ENCODE measurements at regions of chr4 and their contacts with region 1.

Region 1: GRCh38 chr4:152010710-152011079 is 249.9 kb upstream of the GATB start:
- DNase-seq: peak; percentile 53
- ATAC-seq: peak; percentile 64
- H3K4me3 ChIP-seq: peak overlapping the region; percentile 7; the same call in 1 of the 2 replicates
- H3K27ac ChIP-seq: peak overlapping the region; percentile 96
- H3K4me1 ChIP-seq: peaks cover 35% of the 10 kb centered on the region
- H3K27me3 ChIP-seq: no peaks in the 10 kb centered on the region
- CTCF ChIP-seq: no peak

Region 2: GRCh38 chr4:151792995-151793394 is 217.7 kb before region 1 on chr4:
- CTCF ChIA-PET with region 1: no interaction called
- POLR2A ChIA-PET with region 1: no interaction called
- intact Hi-C with region 1: no loop called
- DNase-seq: no peak
- ATAC-seq: no peak
- H3K4me3 ChIP-seq: no peak overlapping the region
- H3K27ac ChIP-seq: no peak overlapping the region
- H3K4me1 ChIP-seq: 0 out of 2 replicates have a peak, but pooled peaks cover 6% of the 10 kb centered on the region
- H3K27me3 ChIP-seq: no peaks in the 10 kb centered on the region
- CTCF ChIP-seq: no peak

Region 3: DNA sequence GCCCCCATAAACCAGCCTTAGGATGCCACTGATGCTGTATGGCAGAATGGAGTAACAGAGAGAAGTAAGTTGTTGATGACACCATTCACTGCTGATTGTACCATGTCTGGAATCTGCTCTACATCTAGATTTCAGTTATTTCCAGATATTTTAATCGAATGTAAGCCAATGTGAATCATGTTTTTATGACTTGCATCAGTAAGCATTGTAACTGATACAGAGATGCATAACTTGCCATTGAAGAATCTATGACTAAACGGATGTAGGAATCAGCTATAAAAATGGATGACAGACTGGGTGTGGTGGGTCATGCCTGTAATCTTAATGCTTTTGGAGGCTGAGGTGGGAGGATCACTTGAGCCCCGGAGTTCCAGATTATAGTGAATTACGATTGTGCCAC is 88.9 kb before region 1 on chr4:
- CTCF ChIA-PET with region 1: no interaction called
- POLR2A ChIA-PET with region 1: interaction called, 4 read pairs
- intact Hi-C with region 1: loop called (anchors 2 kb)
- DNase-seq: peak; percentile 85
- ATAC-seq: peak; percentile 88
- H3K4me3 ChIP-seq: no peak overlapping the region
- H3K27ac ChIP-seq: peak overlapping the region; percentile 96
- H3K4me1 ChIP-seq: peaks cover 25% of the 10 kb centered on the region
- H3K27me3 ChIP-seq: no peaks in the 10 kb centered on the region
- CTCF ChIP-seq: no peak

Region 4: DNA sequence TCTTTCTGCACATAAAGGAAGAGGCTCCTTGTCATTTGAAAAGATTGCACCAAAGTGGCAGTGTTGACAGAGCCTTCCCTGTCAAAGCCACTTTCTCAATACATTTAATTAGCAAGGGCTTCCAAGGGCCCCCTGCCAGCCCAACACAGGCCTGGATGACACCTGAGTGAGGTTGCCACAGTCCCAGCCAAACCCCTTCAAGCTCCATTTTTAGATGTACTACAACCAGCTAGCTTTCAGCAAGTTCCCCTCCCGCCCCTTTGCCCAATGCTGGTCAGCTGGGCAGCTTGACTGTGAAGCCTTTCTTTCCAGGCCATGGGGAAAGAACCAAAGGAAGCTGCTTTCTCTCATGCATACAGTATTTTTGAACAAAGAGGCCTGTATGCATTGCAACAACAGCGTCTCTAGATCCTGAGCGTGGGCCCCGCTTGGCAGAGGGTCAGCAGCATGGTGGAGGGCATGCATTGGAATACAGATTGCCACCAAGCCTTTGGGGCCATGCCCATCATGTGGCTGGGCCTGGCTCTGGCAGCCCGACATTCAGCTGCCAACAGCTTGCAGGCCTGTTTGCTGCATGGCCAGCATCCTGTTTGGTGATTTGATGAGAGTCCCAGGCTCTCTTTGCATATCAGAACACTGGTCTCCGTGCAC is 11.2 kb after region 1 on chr4:
- CTCF ChIA-PET with region 1: no interaction called
- POLR2A ChIA-PET with region 1: no interaction called
- intact Hi-C with region 1: no loop called
- DNase-seq: no peak
- ATAC-seq: no peak
- H3K4me3 ChIP-seq: no peak overlapping the region
- H3K27ac ChIP-seq: no peak overlapping the region
- H3K4me1 ChIP-seq: peaks cover 8% of the 10 kb centered on the region; the same call in 1 of the 2 replicates
- H3K27me3 ChIP-seq: no peaks in the 10 kb centered on the region
- CTCF ChIP-seq: no peak

Region 5: DNA sequence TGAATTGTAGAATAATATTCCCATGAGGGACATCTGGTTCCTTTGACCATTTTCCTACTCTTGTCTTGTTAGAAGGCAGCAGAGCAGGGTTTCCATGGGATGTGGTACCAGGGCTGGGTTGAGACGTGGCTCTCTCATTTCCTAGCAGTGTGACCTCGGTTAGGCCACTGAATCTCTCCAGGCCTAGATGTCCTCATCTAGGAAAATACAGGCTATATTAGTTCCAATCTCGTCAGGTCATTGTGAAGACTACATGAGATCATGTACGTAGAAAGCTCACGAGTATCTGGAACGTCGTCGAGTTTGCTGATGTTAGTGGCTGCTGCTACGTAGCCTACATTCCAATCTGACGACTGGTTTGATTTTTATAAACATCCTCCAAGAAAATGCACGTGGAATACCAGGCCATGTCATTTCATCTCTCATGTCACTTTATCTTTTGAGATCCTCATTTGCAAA is 28.4 kb after region 1 on chr4:
- CTCF ChIA-PET with region 1: no interaction called
- POLR2A ChIA-PET with region 1: no interaction called
- intact Hi-C with region 1: loop called (anchors 2 kb)
- DNase-seq: peak; percentile 55
- ATAC-seq: no peak
- H3K4me3 ChIP-seq: no peak overlapping the region
- H3K27ac ChIP-seq: peak overlapping the region; percentile 60
- H3K4me1 ChIP-seq: peaks cover 23% of the 10 kb centered on the region
- H3K27me3 ChIP-seq: no peaks in the 10 kb centered on the region
- CTCF ChIP-seq: no peak

Region 6: DNA sequence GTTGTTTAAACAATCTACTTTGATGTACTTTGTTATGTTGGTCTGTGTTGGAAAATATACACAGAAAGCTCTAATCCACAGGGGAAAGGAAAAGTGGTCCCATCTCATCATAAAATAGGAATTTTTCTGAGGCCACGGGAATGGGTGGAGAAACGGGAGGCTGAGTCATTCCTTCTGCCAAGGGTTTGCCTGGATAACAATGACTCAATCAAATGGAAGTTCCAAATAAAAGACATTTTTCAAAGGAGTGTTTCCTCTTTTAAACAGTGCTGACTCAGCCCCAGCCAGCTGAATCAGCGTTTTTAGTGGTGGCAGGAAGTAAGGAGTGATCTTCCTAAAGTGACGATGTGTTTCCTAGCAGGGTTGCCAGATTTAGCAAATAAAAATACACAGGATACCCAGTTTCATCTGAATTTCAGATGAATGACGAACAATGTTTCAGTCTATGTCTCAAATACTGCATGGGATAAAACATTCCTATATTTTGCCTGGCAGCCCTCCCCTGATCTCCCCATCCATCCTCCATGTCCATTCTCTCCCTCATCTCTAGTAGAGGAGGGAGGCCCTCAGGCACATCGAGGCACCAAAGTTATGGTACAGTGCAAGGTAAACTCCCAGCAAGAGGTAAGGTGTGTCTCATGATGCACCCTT is 95.5 kb after region 1 on chr4:
- CTCF ChIA-PET with region 1: no interaction called
- POLR2A ChIA-PET with region 1: no interaction called
- intact Hi-C with region 1: loop called (anchors 1 kb)
- DNase-seq: peak; percentile 97
- ATAC-seq: peak; percentile 72
- H3K4me3 ChIP-seq: peak overlapping the region; percentile 36; the same call in 1 of the 2 replicates
- H3K27ac ChIP-seq: peak overlapping the region; percentile 100
- H3K4me1 ChIP-seq: peaks cover 50% of the 10 kb centered on the region
- H3K27me3 ChIP-seq: no peaks in the 10 kb centered on the region
- CTCF ChIP-seq: no peak

Region 7: GRCh38 chr4:152148057-152148456 is 137.4 kb after region 1 on chr4:
- CTCF ChIA-PET with region 1: no interaction called
- POLR2A ChIA-PET with region 1: no interaction called
- intact Hi-C with region 1: no loop called
- DNase-seq: peak; percentile 4
- ATAC-seq: no peak
- H3K4me3 ChIP-seq: no peak overlapping the region
- H3K27ac ChIP-seq: no peak overlapping the region
- H3K4me1 ChIP-seq: no peaks in the 10 kb centered on the region
- H3K27me3 ChIP-seq: no peaks in the 10 kb centered on the region
- CTCF ChIP-seq: no peak

Region 8: DNA sequence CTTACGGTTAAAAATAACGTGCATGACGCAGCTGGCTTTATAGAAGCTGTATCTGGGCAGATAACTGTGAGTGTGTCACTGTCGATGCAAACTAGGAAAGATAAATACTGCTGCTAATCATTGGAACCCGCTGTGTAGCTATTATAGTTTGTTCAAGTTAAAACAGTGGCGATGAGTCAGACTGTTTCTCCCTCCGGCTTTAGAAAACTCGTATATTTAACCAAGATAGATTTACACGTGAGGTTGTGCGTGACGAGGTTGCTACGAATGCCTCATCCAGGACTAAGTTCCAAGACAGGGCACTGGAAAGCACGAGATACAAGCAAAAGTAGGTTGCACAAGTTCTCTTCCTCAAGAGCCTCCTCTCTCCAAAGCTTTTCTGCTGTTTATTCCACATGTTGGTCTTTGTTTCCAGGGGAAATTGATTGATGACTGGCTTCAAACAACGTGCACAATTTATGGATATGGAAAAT is 254.5 kb after region 1 on chr4:
- CTCF ChIA-PET with region 1: no interaction called
- POLR2A ChIA-PET with region 1: no interaction called
- intact Hi-C with region 1: loop called (anchors 2 kb)
- DNase-seq: peak; percentile 94
- ATAC-seq: peak; percentile 98
- H3K4me3 ChIP-seq: peak overlapping the region; percentile 14; the same call in 1 of the 2 replicates
- H3K27ac ChIP-seq: peak overlapping the region; percentile 92
- H3K4me1 ChIP-seq: peaks cover 19% of the 10 kb centered on the region
- H3K27me3 ChIP-seq: no peaks in the 10 kb centered on the region
- CTCF ChIP-seq: no peak